Caco-2 (cell line): ENCODE measurements at regions of chr2 and their contacts with region 1.

Region 1: GRCh38 chr2:146579147-146579930 is 1265.5 kb upstream of the ACVR2A start:
- DNase-seq: peak in 1 of 2 experiments; percentile 22
- H3K4me3 ChIP-seq: no peak overlapping the region
- H3K4me3 Mint-ChIP-seq: no peak overlapping the region
- H3K27ac Mint-ChIP-seq: peak overlapping the region; percentile 73
- H3K4me1 ChIP-seq: peaks cover 31% of the 10 kb centered on the region
- H3K4me1 Mint-ChIP-seq: peaks cover 13% of the 10 kb centered on the region
- H3K27me3 ChIP-seq: no peaks in the 10 kb centered on the region
- H3K27me3 Mint-ChIP-seq: no peaks in the 10 kb centered on the region
- CTCF ChIP-seq: no peak

Region 2: DNA sequence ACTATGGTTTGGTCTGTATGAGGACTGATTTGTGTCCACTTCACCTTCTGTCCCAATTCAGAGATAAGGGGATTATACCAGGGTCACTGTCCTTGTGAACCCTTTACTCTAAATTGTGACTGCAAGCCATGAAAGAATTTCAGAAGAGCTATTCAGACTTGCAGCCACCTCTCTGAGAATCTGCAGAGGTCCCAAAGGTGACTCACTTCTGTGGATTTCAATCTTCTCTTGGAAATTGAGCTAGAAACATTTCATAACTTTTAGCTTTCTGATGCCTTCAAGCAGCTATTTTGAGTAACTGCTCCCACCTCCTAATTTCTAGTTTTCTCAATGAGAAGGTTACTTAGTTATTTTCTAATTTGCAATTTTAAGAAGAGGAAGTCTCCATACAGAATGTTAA is 23.0 kb after region 1 on chr2:
- CTCF ChIA-PET with region 1: no interaction called
- POLR2A ChIA-PET with region 1: no interaction called
- intact Hi-C with region 1: loop called (anchors 1 kb)
- DNase-seq: peak in 1 of 2 experiments; percentile 15
- H3K4me3 ChIP-seq: no peak overlapping the region
- H3K4me3 Mint-ChIP-seq: no peak overlapping the region
- H3K27ac Mint-ChIP-seq: no peak overlapping the region
- H3K4me1 ChIP-seq: peaks cover 9% of the 10 kb centered on the region; the same call in 1 of the 2 replicates
- H3K4me1 Mint-ChIP-seq: peaks cover 6% of the 10 kb centered on the region
- H3K27me3 ChIP-seq: no peaks in the 10 kb centered on the region
- H3K27me3 Mint-ChIP-seq: no peaks in the 10 kb centered on the region
- CTCF ChIP-seq: no peak

Region 3: GRCh38 chr2:147538088-147538487 is 958.7 kb after region 1 on chr2:
- CTCF ChIA-PET with region 1: no interaction called
- POLR2A ChIA-PET with region 1: no interaction called
- intact Hi-C with region 1: no loop called
- DNase-seq: no peak
- H3K4me3 ChIP-seq: no peak overlapping the region
- H3K4me3 Mint-ChIP-seq: no peak overlapping the region
- H3K27ac Mint-ChIP-seq: no peak overlapping the region
- H3K4me1 ChIP-seq: no peaks in the 10 kb centered on the region
- H3K4me1 Mint-ChIP-seq: no peaks in the 10 kb centered on the region
- H3K27me3 ChIP-seq: no peaks in the 10 kb centered on the region
- H3K27me3 Mint-ChIP-seq: no peaks in the 10 kb centered on the region
- CTCF ChIP-seq: no peak